ENCODE measurements at regions of chr11 and their contacts with region 1.

Region 1: GRCh38 chr11:107577346-107577711 is 11.8 kb upstream of the ALKBH8 start:
- DNase-seq: no peak
- H3K4me3 ChIP-seq: no peak overlapping the region
- H3K4me1 ChIP-seq: no peaks in the 10 kb centered on the region
- H3K27me3 ChIP-seq: no peaks in the 10 kb centered on the region

Region 2: GRCh38 chr11:107457558-107458271 is 119.6 kb before region 1 on chr11 and contains the start of gene CWF19L2:
- in situ Hi-C with region 1: no loop called
- DNase-seq: peak; percentile 90 to 94
- H3K4me3 ChIP-seq: peak within 1 kb of the TSS; percentile 65
- H3K4me1 ChIP-seq: peaks cover 8% of the 10 kb centered on the region
- H3K27me3 ChIP-seq: no peaks in the 10 kb centered on the region

Region 3: GRCh38 chr11:107508201-107508857 is 69.0 kb before region 1 on chr11:
- in situ Hi-C with region 1: no loop called
- DNase-seq: no peak
- H3K4me3 ChIP-seq: no peak overlapping the region
- H3K4me1 ChIP-seq: no peaks in the 10 kb centered on the region; the same call in 1 of the 2 replicates
- H3K27me3 ChIP-seq: no peaks in the 10 kb centered on the region

Region 4: DNA sequence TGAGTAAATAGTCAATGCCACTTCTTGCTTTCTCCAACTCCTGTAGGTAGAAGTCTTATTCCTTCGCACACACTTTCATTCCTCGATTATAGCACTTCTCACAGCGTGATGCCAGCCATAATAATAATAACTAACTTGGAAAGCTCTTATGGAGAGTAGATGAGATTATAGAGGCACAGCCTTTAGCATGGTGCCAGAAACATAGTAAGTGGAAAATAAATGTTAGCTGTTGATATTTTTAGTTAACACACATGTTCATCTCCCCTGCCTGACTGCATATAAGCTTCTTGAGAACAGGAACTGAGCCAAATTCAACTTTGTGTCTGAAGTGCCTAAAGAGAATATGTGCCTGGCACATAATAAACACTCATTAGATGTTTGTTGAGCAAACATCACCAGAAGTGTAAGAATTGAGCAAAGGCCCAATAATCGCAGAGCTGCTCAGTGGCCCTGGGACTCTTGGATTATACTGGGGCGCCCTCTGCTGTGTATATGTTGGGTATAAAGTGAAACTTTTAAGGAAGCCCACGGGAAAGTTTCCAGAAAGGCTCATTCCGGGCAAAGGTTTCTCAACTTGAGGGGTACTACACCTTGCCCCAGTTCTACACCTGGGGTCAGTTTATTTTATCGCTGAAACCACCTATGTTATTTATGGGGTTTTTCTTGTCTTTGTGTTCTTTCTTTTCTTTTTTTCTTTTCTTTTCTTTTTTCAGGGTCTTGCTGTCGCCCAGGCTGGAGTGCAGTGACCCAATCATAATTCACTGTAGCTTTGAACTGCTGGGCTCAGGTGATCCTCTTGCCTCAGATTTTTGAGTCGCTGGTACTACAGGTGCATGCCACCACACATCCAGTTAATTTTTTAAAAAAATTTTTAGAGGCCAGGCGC is 112.2 kb after region 1 on chr11:
- in situ Hi-C with region 1: loop called (anchors 5 kb)
- DNase-seq: peak; percentile 53 to 84
- H3K4me3 ChIP-seq: no peak overlapping the region
- H3K4me1 ChIP-seq: no peaks in the 10 kb centered on the region
- H3K27me3 ChIP-seq: no peaks in the 10 kb centered on the region